PC-3 (cell line): ENCODE measurements at regions of chr3 and their contacts with region 1.

Region 1: GRCh38 chr3:183468424-183468823 is 40.0 kb upstream of the MCF2L2 start:
- DNase-seq: no peak
- ATAC-seq: no peak
- H3K4me3 ChIP-seq: no peak overlapping the region
- H3K27ac ChIP-seq: no peak overlapping the region
- H3K4me1 ChIP-seq: peaks cover 3% of the 10 kb centered on the region; the same call in 1 of the 2 replicates
- H3K27me3 ChIP-seq: no peaks in the 10 kb centered on the region
- CTCF ChIP-seq: no peak

Region 2: DNA sequence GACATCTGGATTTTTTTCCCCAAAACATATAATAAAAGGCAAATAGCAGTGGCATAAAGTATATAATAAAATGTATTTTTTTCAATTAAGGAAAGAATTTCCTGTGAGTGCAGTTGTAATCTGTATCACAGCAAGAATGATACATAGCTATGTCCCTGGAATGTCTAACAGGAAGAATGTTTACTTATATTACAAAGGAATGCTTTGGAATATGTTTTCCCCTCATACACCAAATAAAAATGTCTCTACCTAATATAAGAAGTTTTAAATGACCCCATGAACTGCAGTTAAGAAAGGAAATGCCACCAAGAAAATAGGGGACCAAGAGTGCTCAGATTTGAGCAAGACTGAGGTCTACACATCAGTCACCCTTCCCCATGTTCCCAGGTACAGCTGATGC is 713.1 kb before region 1 on chr3:
- CTCF ChIA-PET with region 1: no interaction called
- POLR2A ChIA-PET with region 1: no interaction called
- intact Hi-C with region 1: no loop called
- DNase-seq: peak; percentile 41
- ATAC-seq: peak; percentile 47; the same call in 1 of the 2 replicates
- H3K4me3 ChIP-seq: no peak overlapping the region
- H3K27ac ChIP-seq: no peak overlapping the region
- H3K4me1 ChIP-seq: peaks cover 24% of the 10 kb centered on the region
- H3K27me3 ChIP-seq: no peaks in the 10 kb centered on the region
- CTCF ChIP-seq: no peak

Region 3: DNA sequence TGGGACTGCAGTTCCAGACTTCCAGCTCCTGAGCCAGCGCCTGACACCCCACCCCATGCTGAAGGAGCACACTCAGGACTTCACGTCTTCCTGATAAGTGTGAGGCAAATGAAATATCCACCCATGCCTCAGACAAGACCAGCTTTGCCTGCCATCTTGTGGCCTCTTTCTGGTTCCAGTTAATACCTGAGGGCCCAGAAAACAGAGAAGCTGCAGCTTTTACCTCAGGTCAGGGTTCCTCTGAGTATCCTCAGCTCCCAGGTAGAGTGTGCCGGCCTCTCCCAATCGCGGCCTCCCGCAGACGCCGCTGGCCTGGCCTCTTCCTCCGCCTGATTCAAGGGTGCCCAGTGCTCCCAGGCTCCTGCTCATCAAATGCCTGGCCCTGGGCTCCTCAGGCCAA is 92.2 kb after region 1 on chr3:
- CTCF ChIA-PET with region 1: no interaction called
- POLR2A ChIA-PET with region 1: no interaction called
- intact Hi-C with region 1: loop called (anchors 1 kb)
- DNase-seq: peak; percentile 10
- ATAC-seq: peak; percentile 27; the same call in 1 of the 2 replicates
- H3K4me3 ChIP-seq: no peak overlapping the region
- H3K27ac ChIP-seq: no peak overlapping the region
- H3K4me1 ChIP-seq: no peaks in the 10 kb centered on the region
- H3K27me3 ChIP-seq: no peaks in the 10 kb centered on the region
- CTCF ChIP-seq: peak; percentile 40; the same call in 1 of the 2 replicates

Region 4: DNA sequence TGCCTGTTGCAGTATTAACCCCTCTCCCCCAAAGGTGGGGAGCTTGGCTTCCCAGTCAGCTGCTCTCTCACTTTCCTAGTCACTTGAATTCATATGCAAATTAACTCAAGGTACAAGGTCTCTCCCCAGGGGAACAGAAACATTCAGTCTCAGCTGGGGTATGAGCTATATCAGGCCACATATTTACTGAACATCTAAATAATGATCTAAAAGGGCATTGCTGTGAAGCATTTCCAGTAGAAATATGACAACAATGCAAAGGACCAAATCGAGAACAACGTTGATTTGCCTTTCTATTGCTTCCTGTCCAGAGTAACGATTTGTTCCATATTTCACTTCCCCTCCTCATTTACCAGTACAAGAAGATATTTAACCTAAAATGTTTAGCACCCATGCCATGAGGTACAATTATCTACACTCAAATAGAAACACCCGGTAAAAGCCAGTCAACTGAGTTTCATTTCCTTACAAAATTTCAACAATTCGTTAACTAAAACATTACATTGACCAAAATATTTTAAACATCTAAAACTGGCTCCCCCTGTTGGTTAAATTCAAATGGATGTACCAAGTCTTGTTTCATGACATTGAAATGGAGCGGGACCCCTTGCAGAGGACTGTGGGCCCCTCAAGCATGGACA is 123.6 kb after region 1 on chr3:
- CTCF ChIA-PET with region 1: no interaction called
- POLR2A ChIA-PET with region 1: no interaction called
- intact Hi-C with region 1: loop called (anchors 1 kb)
- DNase-seq: peak; percentile 29
- ATAC-seq: no peak
- H3K4me3 ChIP-seq: no peak overlapping the region
- H3K27ac ChIP-seq: no peak overlapping the region
- H3K4me1 ChIP-seq: no peaks in the 10 kb centered on the region
- H3K27me3 ChIP-seq: 0 out of 2 replicates have a peak, but pooled peaks cover 3% of the 10 kb centered on the region
- CTCF ChIP-seq: peak; percentile 67

Region 5: DNA sequence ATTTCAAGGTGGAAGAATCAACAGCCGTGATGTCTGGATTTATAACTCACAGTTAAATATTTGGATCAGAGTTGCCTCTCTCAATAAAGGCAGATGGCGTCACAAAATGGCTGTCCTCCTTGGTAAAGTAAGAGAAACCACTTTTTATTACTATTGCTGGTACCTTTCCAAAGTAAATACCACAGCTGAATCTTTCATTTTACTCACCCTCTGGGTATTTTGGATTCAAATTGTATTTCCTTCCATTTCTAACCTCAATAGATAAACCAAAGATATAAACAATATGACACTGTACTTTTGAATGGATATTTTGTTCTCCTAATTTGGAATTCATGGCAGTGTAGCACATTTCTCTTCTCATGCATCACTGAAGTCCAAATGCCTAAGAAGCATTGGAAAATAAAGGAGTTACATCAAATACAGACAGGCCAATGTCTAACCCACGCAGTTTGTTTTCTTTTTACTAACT is 196.5 kb after region 1 on chr3:
- CTCF ChIA-PET with region 1: no interaction called
- POLR2A ChIA-PET with region 1: no interaction called
- intact Hi-C with region 1: loop called (anchors 1 kb)
- DNase-seq: peak; percentile 97
- ATAC-seq: peak; percentile 94
- H3K4me3 ChIP-seq: no peak overlapping the region
- H3K27ac ChIP-seq: peak overlapping the region; percentile 52
- H3K4me1 ChIP-seq: peaks cover 10% of the 10 kb centered on the region
- H3K27me3 ChIP-seq: no peaks in the 10 kb centered on the region
- CTCF ChIP-seq: no peak

Region 6: GRCh38 chr3:183766745-183767606 is 298.6 kb after region 1 on chr3:
- CTCF ChIA-PET with region 1: no interaction called
- POLR2A ChIA-PET with region 1: no interaction called
- intact Hi-C with region 1: loop called (anchors 1 kb)
- DNase-seq: peak; percentile 86
- ATAC-seq: peak; percentile 93
- H3K4me3 ChIP-seq: no peak overlapping the region
- H3K27ac ChIP-seq: no peak overlapping the region
- H3K4me1 ChIP-seq: no peaks in the 10 kb centered on the region
- H3K27me3 ChIP-seq: no peaks in the 10 kb centered on the region
- CTCF ChIP-seq: peak; percentile 86

Region 7: GRCh38 chr3:183884427-183885296 is 416.2 kb after region 1 on chr3 and contains the start of gene PARL:
- CTCF ChIA-PET with region 1: no interaction called
- POLR2A ChIA-PET with region 1: no interaction called
- intact Hi-C with region 1: loop called (anchors 1 kb)
- DNase-seq: peak; percentile 94
- ATAC-seq: peak; percentile 99
- H3K4me3 ChIP-seq: peak within 1 kb of the TSS; percentile 98
- H3K27ac ChIP-seq: peak within 1 kb of the TSS; percentile 35
- H3K4me1 ChIP-seq: peaks cover 12% of the 10 kb centered on the region; the same call in 1 of the 2 replicates
- H3K27me3 ChIP-seq: no peaks in the 10 kb centered on the region
- CTCF ChIP-seq: peak; percentile 91
- total RNA-seq, gene PARL: 66.3 and 69.2 TPM in 2 replicates